H1 (cell line): ENCODE measurements at regions of chr17 and their contacts with region 1.

Region 1: GRCh38 chr17:50026901-50027630 is 28.8 kb upstream of the ITGA3 start:
- DNase-seq: peak; percentile 44 to 98
- H3K4me3 ChIP-seq: peak overlapping the region in 1 of 4 experiments; percentile 35; a peak in 1 of 8 replicates
- H3K27ac ChIP-seq: no peak overlapping the region
- H3K4me1 ChIP-seq: peaks cover 0 to 20% (median 14%) of the 10 kb centered on the region in 4 experiments; a peak in 6 of 7 replicates
- H3K27me3 ChIP-seq: 0 out of 7 replicates have a peak, but pooled peaks cover 0 to 5% (median 0%) of the 10 kb centered on the region in 4 experiments
- CTCF ChIP-seq: peak; percentile 94 to 98 (median 96)
- EP300 ChIP-seq: no peak
- POLR2A ChIP-seq: no peak
- RAD21 ChIP-seq: peak; percentile 82 to 85

Region 2: GRCh38 chr17:50003911-50004310 is 23.2 kb before region 1 on chr17:
- CTCF ChIA-PET with region 1: interaction called, 13 read pairs
- POLR2A ChIA-PET with region 1: no interaction called
- DNase-seq: no peak
- H3K4me3 ChIP-seq: no peak overlapping the region
- H3K27ac ChIP-seq: no peak overlapping the region
- H3K4me1 ChIP-seq: no peaks in the 10 kb centered on the region
- H3K27me3 ChIP-seq: peaks cover 0 to 15% (median 6%) of the 10 kb centered on the region in 4 experiments; a peak in 4 of 7 replicates
- CTCF ChIP-seq: no peak
- EP300 ChIP-seq: no peak
- POLR2A ChIP-seq: no peak
- RAD21 ChIP-seq: no peak

Region 3: GRCh38 chr17:50037321-50038071 is 10.4 kb after region 1 on chr17:
- CTCF ChIA-PET with region 1: interaction called, 11 read pairs
- POLR2A ChIA-PET with region 1: interaction called, 4 read pairs
- DNase-seq: no peak
- H3K4me3 ChIP-seq: no peak overlapping the region
- H3K27ac ChIP-seq: no peak overlapping the region
- H3K4me1 ChIP-seq: peaks cover 0 to 9% (median 0%) of the 10 kb centered on the region in 4 experiments; a peak in 3 of 7 replicates
- H3K27me3 ChIP-seq: no peaks in the 10 kb centered on the region; a peak in 1 of 7 replicates
- CTCF ChIP-seq: no peak
- EP300 ChIP-seq: no peak
- POLR2A ChIP-seq: no peak
- RAD21 ChIP-seq: no peak

Region 4: DNA sequence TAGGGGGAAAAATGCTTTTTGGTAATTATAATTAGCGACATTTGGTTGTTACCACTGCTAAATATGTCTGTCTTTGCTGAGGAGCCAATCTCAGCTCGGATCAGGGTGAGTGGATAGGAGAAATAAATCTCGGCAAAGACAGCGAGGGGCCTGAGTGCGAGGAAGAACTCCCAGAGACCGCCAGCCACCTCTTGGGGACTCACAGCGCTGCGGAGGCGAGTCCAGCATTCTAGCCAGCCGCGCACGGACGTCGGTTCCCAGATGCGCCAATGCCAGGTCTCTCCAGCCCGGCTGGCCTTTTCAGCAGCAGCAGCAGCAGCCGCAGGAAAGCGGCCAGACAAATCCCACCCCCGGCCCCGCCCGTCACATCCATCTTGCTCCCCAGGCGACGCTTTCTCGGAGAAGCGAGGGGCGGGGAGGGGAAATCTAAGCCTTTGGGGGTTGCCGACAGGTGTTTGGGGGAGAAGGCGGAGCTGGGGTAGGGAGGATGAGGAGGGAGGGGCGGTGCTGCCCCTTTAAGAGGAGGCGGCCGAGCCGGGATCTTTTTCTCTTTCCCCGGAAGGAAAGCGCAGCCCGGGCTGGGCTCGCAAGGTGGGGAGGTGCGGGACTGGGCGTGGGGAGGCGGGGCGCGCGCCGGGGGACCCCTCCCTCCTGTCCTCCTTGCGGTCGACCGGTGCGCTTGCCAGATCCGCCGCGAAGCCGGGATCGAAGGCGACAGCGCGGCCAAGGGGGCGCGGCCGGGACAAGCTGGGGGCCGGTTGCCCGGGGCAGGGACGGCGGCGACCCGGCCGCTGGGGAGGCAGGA is 28.6 kb after region 1 on chr17 and contains the start of gene ITGA3:
- CTCF ChIA-PET with region 1: interaction called, 103 read pairs
- POLR2A ChIA-PET with region 1: interaction called, 23 read pairs
- DNase-seq: peak; percentile 84 to 89
- H3K4me3 ChIP-seq: peak within 1 kb of the TSS; percentile 37 to 65 (median 58)
- H3K27ac ChIP-seq: no peak within 1 kb of the TSS
- H3K4me1 ChIP-seq: peaks cover 11 to 21% (median 15%) of the 10 kb centered on the region in 4 experiments
- H3K27me3 ChIP-seq: peaks cover 0 to 13% (median 11%) of the 10 kb centered on the region in 4 experiments; a peak in 5 of 7 replicates
- CTCF ChIP-seq: peak in 2 of 3 experiments; percentile 4 to 17; a peak in 3 of 4 replicates
- EP300 ChIP-seq: no peak
- POLR2A ChIP-seq: no peak
- RAD21 ChIP-seq: no peak
- total RNA-seq, gene ITGA3: 21.7 and 24.2 TPM in 2 replicates

Region 5: GRCh38 chr17:50062323-50063121 is 35.5 kb after region 1 on chr17:
- CTCF ChIA-PET with region 1: interaction called, 103 read pairs
- POLR2A ChIA-PET with region 1: interaction called, 23 read pairs
- DNase-seq: no peak
- H3K4me3 ChIP-seq: no peak overlapping the region
- H3K27ac ChIP-seq: no peak overlapping the region
- H3K4me1 ChIP-seq: peaks cover 0 to 7% (median 2%) of the 10 kb centered on the region in 4 experiments; a peak in 5 of 7 replicates
- H3K27me3 ChIP-seq: peaks cover 0 to 4% (median 3%) of the 10 kb centered on the region in 4 experiments; a peak in 5 of 7 replicates
- CTCF ChIP-seq: no peak
- EP300 ChIP-seq: no peak
- POLR2A ChIP-seq: no peak
- RAD21 ChIP-seq: no peak

Region 6: GRCh38 chr17:50079334-50080095 is 52.4 kb after region 1 on chr17:
- CTCF ChIA-PET with region 1: interaction called, 158 read pairs
- POLR2A ChIA-PET with region 1: interaction called, 4 read pairs
- DNase-seq: peak in 1 of 2 experiments; percentile 91
- H3K4me3 ChIP-seq: no peak overlapping the region
- H3K27ac ChIP-seq: no peak overlapping the region
- H3K4me1 ChIP-seq: peaks cover 0 to 4% (median 3%) of the 10 kb centered on the region in 4 experiments; a peak in 3 of 7 replicates
- H3K27me3 ChIP-seq: no peaks in the 10 kb centered on the region; a peak in 2 of 7 replicates
- CTCF ChIP-seq: peak; percentile 100
- EP300 ChIP-seq: no peak
- POLR2A ChIP-seq: no peak
- RAD21 ChIP-seq: peak; percentile 54 to 73; a peak in 3 of 4 replicates

Region 7: DNA sequence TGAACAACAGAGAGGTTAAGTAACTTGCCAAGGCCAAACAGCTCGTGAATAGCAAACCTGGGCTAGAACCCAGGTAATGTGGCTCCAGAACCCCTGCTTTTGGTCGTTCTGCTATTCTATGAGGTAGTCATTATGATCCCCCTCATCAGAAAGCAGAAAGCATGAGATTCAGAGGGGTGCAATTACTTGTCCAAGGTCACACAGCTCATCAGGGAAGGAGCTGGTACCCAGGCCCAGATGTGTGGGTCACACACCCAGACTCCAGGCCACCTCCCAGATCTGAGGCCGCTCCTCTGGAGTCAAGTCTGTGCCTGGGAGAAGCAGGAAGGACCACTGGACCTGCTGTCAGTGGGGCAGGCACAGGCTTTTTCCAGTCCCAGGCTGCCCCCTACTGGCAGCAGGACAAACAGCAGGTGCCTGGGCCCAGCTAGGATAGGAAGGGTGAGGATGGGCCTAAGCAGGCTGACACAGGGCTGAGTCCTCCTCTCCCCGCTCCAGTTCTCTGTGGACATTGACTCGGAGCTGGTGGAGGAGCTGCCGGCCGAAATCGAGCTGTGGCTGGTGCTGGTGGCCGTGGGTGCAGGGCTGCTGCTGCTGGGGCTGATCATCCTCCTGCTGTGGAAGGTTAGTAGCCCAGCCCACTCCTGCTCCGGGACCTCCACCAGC is 60.3 kb after region 1 on chr17:
- CTCF ChIA-PET with region 1: interaction called, 158 read pairs
- POLR2A ChIA-PET with region 1: interaction called, 7 read pairs
- DNase-seq: peak in 1 of 2 experiments; percentile 94
- H3K4me3 ChIP-seq: no peak overlapping the region
- H3K27ac ChIP-seq: no peak overlapping the region
- H3K4me1 ChIP-seq: no peaks in the 10 kb centered on the region; a peak in 1 of 7 replicates
- H3K27me3 ChIP-seq: no peaks in the 10 kb centered on the region
- CTCF ChIP-seq: peak; percentile 98 to 99 (median 98)
- EP300 ChIP-seq: no peak
- POLR2A ChIP-seq: no peak
- RAD21 ChIP-seq: peak; percentile 96 to 98